Calu3 (cell line): ENCODE measurements at regions of chr14 and their contacts with region 1.

Region 1: DNA sequence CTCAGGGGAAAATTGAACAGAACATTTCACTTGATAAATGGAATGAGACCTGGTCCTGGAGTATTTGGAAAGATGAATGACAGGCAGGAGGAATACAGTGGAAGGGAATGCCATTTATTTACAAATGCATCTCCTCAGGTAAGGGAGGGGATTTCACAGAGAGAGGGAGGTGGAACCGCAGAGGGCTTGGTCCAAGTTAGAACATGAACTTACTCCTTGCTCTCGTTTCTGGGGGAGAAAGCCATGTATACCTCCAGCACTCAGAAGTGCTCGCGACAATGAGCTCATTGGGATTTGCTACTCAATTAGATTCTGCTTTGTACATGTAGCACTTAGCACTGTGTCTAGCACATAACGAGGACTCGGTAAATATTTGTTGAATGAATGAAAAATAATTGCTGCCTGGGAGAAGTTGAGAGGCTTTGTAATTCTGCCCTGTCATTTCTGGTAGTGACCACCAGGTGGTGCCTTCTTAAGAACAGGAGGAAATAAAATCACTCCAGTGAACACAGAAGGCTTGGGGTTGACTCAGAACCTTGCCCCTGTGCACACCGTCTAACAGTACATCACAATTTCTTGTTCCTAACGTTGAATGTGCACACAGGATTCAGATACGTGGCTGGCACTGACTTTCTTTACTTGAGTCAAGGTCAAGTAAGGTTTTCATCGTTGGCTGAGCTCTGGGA is 91.6 kb downstream of the RGS6 start:
- DNase-seq: peak; percentile 44
- H3K4me3 Mint-ChIP-seq: no peak overlapping the region
- H3K27ac Mint-ChIP-seq: no peak overlapping the region
- H3K4me1 Mint-ChIP-seq: peaks cover 9% of the 10 kb centered on the region
- H3K27me3 Mint-ChIP-seq: peaks cover 49% of the 10 kb centered on the region
- CTCF ChIP-seq: no peak

Region 2: DNA sequence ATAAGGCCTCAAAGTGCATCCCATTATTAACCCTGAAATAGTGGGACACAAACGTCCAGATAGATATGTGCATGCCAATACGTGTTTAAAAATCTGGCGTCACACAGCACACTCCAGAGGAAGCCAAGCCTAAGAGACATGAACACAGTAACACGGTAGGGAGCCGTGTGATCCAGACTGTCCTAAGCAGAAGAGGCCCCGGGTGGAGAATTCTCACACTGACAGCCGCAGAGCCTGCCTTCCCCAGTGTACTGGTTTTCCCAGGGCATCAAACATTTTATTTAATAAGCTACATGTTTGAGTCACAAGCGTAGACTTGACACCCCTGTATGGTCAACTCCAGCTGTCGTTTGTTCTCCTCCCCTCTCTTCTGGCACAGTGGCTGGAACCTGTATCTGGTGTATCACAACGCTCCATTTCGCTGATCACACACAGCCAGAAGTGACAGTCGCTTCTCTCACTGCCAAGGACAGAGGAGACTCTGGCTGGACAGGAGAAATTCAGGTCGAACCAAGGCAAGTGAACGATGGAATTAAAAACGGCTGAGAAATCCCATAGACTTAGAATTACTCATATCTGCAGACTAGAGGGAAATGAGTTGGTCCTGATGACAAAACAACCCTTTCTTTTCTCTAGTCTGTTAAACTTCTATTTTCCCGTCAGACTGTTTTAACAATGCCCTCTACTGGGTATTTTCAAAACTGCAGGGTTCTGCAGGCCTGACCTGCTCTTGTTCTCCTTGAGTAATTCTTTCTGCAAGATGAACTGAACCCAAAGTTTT is 268.2 kb after region 1 on chr14:
- CTCF ChIA-PET with region 1: interaction called, 3 read pairs
- intact Hi-C with region 1: loop called (anchors 5 kb)
- DNase-seq: peak; percentile 49
- H3K4me3 Mint-ChIP-seq: no peak overlapping the region
- H3K27ac Mint-ChIP-seq: no peak overlapping the region
- H3K4me1 Mint-ChIP-seq: no peaks in the 10 kb centered on the region
- H3K27me3 Mint-ChIP-seq: peaks cover 42% of the 10 kb centered on the region
- CTCF ChIP-seq: peak; percentile 26

Region 3: GRCh38 chr14:72420725-72421474 is 397.0 kb after region 1 on chr14:
- CTCF ChIA-PET with region 1: no interaction called
- intact Hi-C with region 1: loop called (anchors 2 kb)
- DNase-seq: peak; percentile 84
- H3K4me3 Mint-ChIP-seq: no peak overlapping the region
- H3K27ac Mint-ChIP-seq: no peak overlapping the region
- H3K4me1 Mint-ChIP-seq: no peaks in the 10 kb centered on the region
- H3K27me3 Mint-ChIP-seq: peaks cover 44% of the 10 kb centered on the region
- CTCF ChIP-seq: peak; percentile 87